Naive thymus-derived CD4-positive, alpha-beta T cell (primary cell): ENCODE measurements at regions of chr18 and their contacts with region 1.

Region 1: GRCh38 chr18:75161256-75162028 is 47.5 kb downstream of the PTGR3 start:
- DNase-seq: peak in 7 of 9 donors; percentile 26 to 51 (median 37)
- ATAC-seq: peak; percentile 77
- H3K4me3 ChIP-seq: peak overlapping the region; percentile 77
- H3K4me3 Mint-ChIP-seq: peak overlapping the region; percentile 80 to 95 (median 91)
- H3K27ac ChIP-seq: peak overlapping the region; percentile 69
- H3K27ac Mint-ChIP-seq: peak overlapping the region in 8 of 9 donors; percentile 79 to 93 (median 88)
- H3K4me1 ChIP-seq: no peaks in the 10 kb centered on the region
- H3K4me1 Mint-ChIP-seq: peaks cover 7 to 28% (median 12%) of the 10 kb centered on the region in 7 donors
- H3K27me3 ChIP-seq: no peaks in the 10 kb centered on the region
- H3K27me3 Mint-ChIP-seq: peaks cover 0 to 4% (median 0%) of the 10 kb centered on the region in 5 donors

Region 2: DNA sequence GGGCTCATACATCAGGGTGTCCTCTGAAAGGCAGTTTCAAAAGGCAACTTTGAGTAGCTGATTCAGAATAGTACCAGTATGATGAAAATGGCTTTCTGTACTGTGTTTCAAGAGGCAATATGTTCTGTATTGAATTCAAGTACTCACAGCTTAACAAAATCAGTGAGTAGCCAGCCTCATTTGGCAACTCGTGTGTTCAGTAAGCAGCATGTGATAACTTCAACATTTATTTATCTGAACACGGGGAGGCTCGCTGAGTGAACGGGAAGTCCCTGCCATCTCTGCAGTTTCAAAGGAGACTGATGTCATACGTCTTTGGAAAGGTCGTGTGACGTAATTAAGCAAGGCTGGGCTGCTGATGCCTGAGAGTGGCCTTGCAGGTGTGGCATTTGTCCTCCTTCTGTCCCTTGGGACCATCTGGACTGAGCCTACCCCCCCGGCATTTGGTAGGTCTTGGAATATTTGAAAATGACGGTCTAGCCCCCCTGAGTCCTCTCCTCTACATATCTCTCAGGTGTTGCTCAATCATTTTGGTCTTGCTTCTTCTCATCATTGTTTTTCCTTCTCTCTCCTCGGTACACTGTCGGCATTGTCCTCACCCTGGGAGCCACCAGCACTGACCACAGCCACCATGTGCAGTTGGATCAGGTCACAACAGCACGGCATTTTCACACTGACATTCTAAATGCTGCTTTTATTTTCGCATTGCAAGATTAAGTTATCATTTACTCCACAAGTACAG is 203.2 kb after region 1 on chr18:
- CTCF ChIA-PET with region 1: no interaction called
- POLR2A ChIA-PET with region 1: no interaction called
- intact Hi-C with region 1: loop called in 1 of 2 experiments (anchors 1 kb)
- DNase-seq: no peak
- ATAC-seq: no peak
- H3K4me3 ChIP-seq: no peak overlapping the region
- H3K4me3 Mint-ChIP-seq: no peak overlapping the region
- H3K27ac ChIP-seq: no peak overlapping the region
- H3K27ac Mint-ChIP-seq: peak overlapping the region in 1 of 9 donors; percentile 12
- H3K4me1 ChIP-seq: no peaks in the 10 kb centered on the region
- H3K4me1 Mint-ChIP-seq: peaks cover 0 to 1% (median 0%) of the 10 kb centered on the region in 7 donors
- H3K27me3 ChIP-seq: no peaks in the 10 kb centered on the region
- H3K27me3 Mint-ChIP-seq: peaks cover 0 to 2% (median under 1%) of the 10 kb centered on the region in 5 donors